H1 (cell line): ENCODE measurements at regions of chrX and their contacts with region 1.

Region 1: DNA sequence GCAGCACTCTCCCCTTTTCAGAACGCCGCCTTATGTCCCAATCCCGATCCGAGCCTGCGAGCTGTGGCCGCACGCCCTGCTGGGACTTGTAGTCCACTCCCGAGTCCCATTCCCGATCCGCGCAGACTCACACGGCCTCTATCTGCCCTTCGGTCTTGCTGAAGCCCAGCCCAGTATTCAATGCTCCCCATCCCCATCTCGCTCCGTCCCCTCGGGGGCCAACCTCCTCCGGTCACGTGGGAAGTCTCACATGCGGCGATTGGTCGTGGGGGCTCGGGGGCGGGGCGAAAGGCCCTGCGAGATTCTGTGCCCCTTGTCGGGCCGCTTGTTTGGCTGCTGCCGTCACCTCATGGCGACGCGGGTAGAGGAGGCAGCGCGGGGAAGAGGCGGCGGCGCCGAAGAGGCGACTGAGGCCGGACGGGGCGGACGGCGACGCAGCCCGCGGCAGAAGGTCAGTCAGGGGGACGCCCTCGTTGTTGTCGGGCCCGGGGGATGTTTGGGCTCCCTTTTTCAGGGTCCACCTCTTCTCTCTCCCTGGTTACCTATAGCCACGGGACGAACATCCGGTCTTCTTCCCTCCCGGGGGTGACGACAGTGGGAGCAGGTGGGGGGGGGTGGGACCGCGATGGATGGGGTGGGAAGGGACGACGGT is at the start of gene TXLNG:
- DNase-seq: peak; percentile 86 to 96
- H3K4me3 ChIP-seq: peak within 1 kb of the TSS; percentile 63 to 96 (median 80)
- H3K27ac ChIP-seq: no peak within 1 kb of the TSS
- H3K4me1 ChIP-seq: no peaks in the 10 kb centered on the region
- H3K27me3 ChIP-seq: no peaks in the 10 kb centered on the region
- CTCF ChIP-seq: no peak
- EP300 ChIP-seq: no peak
- POLR2A ChIP-seq: peak; percentile 47 to 79
- RAD21 ChIP-seq: no peak
- total RNA-seq, gene TXLNG: 42.6 and 42.9 TPM in 2 replicates

Region 2: DNA sequence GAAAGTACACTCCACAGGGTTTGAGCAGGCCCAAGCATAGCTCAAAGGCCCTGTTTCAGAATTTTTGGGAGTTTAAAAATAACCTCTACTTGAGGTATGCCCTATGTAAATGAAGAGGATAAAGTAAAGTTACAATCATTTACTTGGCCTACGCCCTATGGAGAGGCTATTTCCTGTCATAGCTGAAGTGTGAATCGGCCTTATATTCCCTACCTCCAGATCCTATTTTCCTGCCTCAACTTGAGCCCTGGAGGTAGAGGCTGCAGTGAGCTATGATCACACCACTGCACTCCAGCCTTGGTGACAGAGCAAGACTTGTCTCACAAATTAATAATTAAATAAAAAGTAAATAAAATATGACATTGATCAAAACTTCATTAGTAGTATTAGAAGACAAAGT is 11.5 kb before region 1 on chrX:
- CTCF ChIA-PET with region 1: no interaction called
- POLR2A ChIA-PET with region 1: interaction called, 10 read pairs
- DNase-seq: no peak
- H3K4me3 ChIP-seq: no peak overlapping the region
- H3K27ac ChIP-seq: no peak overlapping the region
- H3K4me1 ChIP-seq: peaks cover 0 to 6% (median 0%) of the 10 kb centered on the region in 4 experiments; a peak in 2 of 7 replicates
- H3K27me3 ChIP-seq: no peaks in the 10 kb centered on the region
- CTCF ChIP-seq: no peak
- EP300 ChIP-seq: no peak
- POLR2A ChIP-seq: no peak
- RAD21 ChIP-seq: no peak

Region 3: GRCh38 chrX:16797358-16797757 is 11.1 kb after region 1 on chrX:
- CTCF ChIA-PET with region 1: no interaction called
- POLR2A ChIA-PET with region 1: interaction called, 12 read pairs
- DNase-seq: no peak
- H3K4me3 ChIP-seq: no peak overlapping the region
- H3K27ac ChIP-seq: no peak overlapping the region
- H3K4me1 ChIP-seq: no peaks in the 10 kb centered on the region
- H3K27me3 ChIP-seq: no peaks in the 10 kb centered on the region
- CTCF ChIP-seq: no peak
- EP300 ChIP-seq: no peak
- POLR2A ChIP-seq: no peak
- RAD21 ChIP-seq: no peak

Region 4: DNA sequence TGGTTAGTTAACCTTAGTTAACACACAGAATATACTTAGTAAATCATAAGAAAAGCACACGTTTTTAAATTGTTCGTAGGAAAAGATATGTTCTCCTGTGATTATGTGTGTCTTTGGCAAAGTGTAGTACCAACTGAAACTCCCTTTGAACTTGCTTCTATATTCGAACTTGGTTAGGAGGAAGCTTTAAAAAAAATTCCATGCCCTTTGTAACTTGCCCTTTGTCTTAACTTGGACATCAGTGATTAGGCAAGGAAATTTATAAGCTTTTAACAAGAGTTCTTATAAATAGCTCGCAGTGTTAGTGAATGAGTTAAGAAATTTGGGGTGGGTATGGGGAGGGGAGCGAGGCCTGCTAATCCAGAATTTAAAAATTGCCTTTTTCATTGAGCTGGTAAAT is 33.4 kb after region 1 on chrX:
- CTCF ChIA-PET with region 1: no interaction called
- POLR2A ChIA-PET with region 1: no interaction called
- DNase-seq: no peak
- H3K4me3 ChIP-seq: no peak overlapping the region
- H3K27ac ChIP-seq: no peak overlapping the region
- H3K4me1 ChIP-seq: no peaks in the 10 kb centered on the region
- H3K27me3 ChIP-seq: no peaks in the 10 kb centered on the region
- CTCF ChIP-seq: no peak
- EP300 ChIP-seq: no peak
- POLR2A ChIP-seq: no peak
- RAD21 ChIP-seq: no peak

Region 5: GRCh38 chrX:16892504-16893362 is 106.5 kb after region 1 on chrX:
- CTCF ChIA-PET with region 1: no interaction called
- POLR2A ChIA-PET with region 1: no interaction called
- DNase-seq: peak in 1 of 2 experiments; percentile 62
- H3K4me3 ChIP-seq: no peak overlapping the region
- H3K27ac ChIP-seq: no peak overlapping the region
- H3K4me1 ChIP-seq: no peaks in the 10 kb centered on the region; a peak in 1 of 7 replicates
- H3K27me3 ChIP-seq: no peaks in the 10 kb centered on the region
- CTCF ChIP-seq: peak; percentile 30 to 91 (median 82)
- EP300 ChIP-seq: no peak
- POLR2A ChIP-seq: peak in 1 of 2 experiments; percentile 39; a peak in 1 of 3 replicates
- RAD21 ChIP-seq: peak; percentile 51 to 60